Astrocyte of the cerebellum (primary cell): ENCODE measurements at regions of chr10 and their contacts with region 1.

Region 1: DNA sequence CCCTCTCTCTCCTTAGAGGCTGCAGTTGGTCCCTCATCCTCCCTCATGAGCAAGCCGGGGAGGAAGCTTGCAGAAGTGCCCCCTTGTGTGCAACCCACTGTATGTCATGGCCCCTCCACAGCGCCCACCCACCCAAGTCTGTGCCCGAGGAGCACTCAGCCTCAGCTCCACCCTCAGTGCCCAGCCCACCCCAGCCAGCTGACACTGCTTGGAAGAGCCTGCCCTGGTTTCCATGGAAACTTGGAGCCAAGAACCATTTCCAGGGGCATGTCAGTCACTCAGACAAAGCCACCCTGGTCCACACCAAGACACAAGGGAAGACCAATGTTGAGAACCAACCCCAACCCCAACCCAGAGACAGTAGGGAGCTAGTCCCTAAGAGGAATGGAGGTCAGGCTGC is 79.5 kb downstream of the PAX2 start:
- DNase-seq: no peak
- H3K4me3 ChIP-seq: no peak overlapping the region
- CTCF ChIP-seq: no peak

Region 2: GRCh38 chr10:100760726-100761125 is 64.2 kb before region 1 on chr10:
- in situ Hi-C with region 1: loop called (anchors 5 kb)
- DNase-seq: no peak
- H3K4me3 ChIP-seq: no peak overlapping the region
- CTCF ChIP-seq: no peak

Region 3: GRCh38 chr10:100894589-100895294 is 69.9 kb after region 1 on chr10:
- in situ Hi-C with region 1: no loop called
- DNase-seq: no peak
- H3K4me3 ChIP-seq: no peak overlapping the region
- CTCF ChIP-seq: no peak